Right cardiac atrium (tissue), 5 donors: ENCODE measurements at regions of chr7 and their contacts with region 1.

Region 1: DNA sequence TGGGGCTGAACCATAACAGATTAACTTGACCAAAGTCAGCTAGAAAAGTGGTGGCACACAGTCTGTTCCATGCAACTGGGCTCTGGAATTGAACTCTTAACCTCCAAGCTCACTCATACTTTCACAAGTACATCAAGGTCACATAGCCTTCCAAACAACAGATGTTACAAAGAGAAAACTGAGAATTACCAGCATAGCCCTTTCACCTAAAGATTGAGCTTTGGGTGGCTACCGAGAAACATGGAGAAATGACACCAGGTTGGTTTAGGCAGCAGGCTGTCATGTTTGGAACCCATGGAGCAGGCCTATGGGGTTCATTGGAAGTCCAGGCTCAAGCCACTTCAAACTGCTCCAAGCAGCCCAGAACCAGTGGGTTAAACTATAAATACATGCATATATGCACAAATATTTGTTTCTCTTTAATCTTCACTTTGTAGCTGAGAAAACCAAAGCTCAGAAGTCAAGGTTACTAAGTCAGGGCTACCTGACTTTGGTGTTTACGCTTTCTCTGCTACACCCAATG is 59.1 kb downstream of the MALSU1 start:
- DNase-seq: no peak
- ATAC-seq: no peak
- H3K4me3 ChIP-seq: no peak overlapping the region
- H3K27ac ChIP-seq: no peak overlapping the region
- H3K4me1 ChIP-seq: no peaks in the 10 kb centered on the region
- H3K27me3 ChIP-seq: no peaks in the 10 kb centered on the region

Region 2: GRCh38 chr7:23377134-23377533 is 18.9 kb after region 1 on chr7:
- intact Hi-C with region 1: loop called in 1 of 4 experiments (anchors 1 kb)
- DNase-seq: no peak
- ATAC-seq: no peak
- H3K4me3 ChIP-seq: no peak overlapping the region
- H3K27ac ChIP-seq: no peak overlapping the region
- H3K4me1 ChIP-seq: no peaks in the 10 kb centered on the region
- H3K27me3 ChIP-seq: no peaks in the 10 kb centered on the region